ENCODE measurements at regions of chr3 and their contacts with region 1.

Region 1: GRCh38 chr3:187745201-187746058 is at the start of gene BCL6:
- DNase-seq: peak; percentile 97
- ATAC-seq: peak; percentile 28
- H3K4me3 ChIP-seq: peak within 1 kb of the TSS; percentile 98 to 100 (median 99)
- H3K27ac ChIP-seq: peak within 1 kb of the TSS; percentile 100
- H3K4me1 ChIP-seq: peaks cover 40% of the 10 kb centered on the region
- H3K27me3 ChIP-seq: peaks cover 0 to 5% of the 10 kb centered on the region in 2 experiments; a peak in 1 of 5 replicates
- CTCF ChIP-seq: no peak
- EP300 ChIP-seq: peak; percentile 64 to 69; a peak in 3 of 4 replicates
- POLR2A ChIP-seq: peak; percentile 69 to 82
- RAD21 ChIP-seq: 0 out of 2 replicates have a peak, but pooled peaks have one; percentile 13
- total RNA-seq, gene BCL6: 20.3 and 21.2 TPM in 2 replicates

Region 2: DNA sequence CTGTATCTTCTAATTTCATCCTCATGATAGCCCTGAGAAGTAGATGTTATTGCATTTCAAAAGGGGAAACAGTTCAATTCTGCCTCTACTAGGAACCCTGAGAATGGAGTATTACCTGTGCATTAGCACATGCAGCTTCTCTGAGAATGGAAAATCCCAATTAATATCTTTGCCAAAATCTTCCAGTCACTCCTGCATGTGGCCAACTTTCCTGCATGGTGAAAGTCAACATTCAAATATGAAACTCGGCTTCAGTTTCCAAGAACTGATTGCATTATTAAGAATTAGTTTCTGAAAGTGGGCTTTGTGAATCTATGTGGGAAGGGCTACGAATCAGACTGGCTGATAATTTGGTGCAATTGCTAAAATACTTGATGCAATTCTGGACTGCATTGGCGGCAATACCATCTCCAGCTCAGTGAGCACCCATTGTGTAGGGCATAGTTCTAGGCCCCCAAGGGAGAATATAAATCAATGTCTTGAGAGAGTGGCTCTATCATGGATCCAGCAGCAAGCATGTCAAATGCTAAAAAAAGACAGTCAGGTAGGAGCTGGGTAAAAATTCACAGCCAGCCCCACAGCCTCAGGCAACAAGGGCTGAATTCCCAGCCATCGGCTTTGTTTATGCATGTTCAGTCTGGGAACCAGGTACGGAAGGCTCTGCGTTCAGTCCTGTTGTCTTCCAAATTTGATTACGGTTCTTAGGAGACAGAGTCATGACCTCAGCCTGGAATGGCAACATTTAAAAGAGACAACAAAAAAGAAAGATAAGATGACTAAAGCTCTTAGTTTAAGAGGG is 18.6 kb after region 1 on chr3:
- CTCF ChIA-PET with region 1: no interaction called
- POLR2A ChIA-PET with region 1: interaction called, 17 read pairs
- in situ Hi-C with region 1: no loop called
- intact Hi-C with region 1: no loop called
- DNase-seq: no peak
- ATAC-seq: no peak
- H3K4me3 ChIP-seq: no peak overlapping the region
- H3K27ac ChIP-seq: no peak overlapping the region
- H3K4me1 ChIP-seq: peaks cover 34% of the 10 kb centered on the region
- H3K27me3 ChIP-seq: no peaks in the 10 kb centered on the region
- CTCF ChIP-seq: no peak
- EP300 ChIP-seq: no peak
- POLR2A ChIP-seq: no peak
- RAD21 ChIP-seq: no peak

Region 3: DNA sequence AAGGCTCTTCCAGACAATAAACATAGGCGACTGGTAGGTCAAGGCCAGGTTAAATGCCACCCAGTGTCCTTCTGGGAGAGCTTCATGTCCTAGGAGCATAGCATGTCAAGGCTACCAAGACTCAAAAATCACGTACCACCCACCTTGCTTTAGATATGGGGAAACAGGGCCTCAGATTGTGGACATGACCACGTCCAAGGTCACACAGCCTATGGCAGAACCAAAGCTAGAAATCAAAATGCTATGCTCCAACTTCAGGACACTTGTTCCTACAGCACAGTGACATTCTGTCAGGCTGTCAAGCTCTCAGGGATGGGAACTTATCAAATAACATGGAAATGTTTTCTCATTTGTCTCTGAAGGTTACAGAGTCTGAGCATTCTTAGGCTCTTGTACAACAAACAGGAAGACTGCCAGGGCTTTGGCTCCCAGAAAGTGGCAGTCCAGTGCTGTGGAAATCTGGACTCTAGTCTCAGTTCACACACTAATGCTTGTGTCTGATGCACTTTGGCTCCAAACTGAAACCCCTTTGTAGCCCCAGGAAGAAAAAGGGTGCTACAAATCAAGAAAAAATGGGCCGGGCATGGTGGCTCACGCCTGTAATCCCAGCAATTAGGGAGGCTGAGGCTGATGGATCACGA is 238.2 kb after region 1 on chr3:
- CTCF ChIA-PET with region 1: no interaction called
- POLR2A ChIA-PET with region 1: interaction called, 9 read pairs
- in situ Hi-C with region 1: no loop called
- intact Hi-C with region 1: loop called (anchors 5 kb)
- DNase-seq: peak; percentile 93
- ATAC-seq: peak; percentile 92
- H3K4me3 ChIP-seq: peak overlapping the region in 2 of 3 experiments; percentile 15 to 29; a peak in 2 of 6 replicates
- H3K27ac ChIP-seq: peak overlapping the region; percentile 70
- H3K4me1 ChIP-seq: peaks cover 62% of the 10 kb centered on the region
- H3K27me3 ChIP-seq: no peaks in the 10 kb centered on the region
- CTCF ChIP-seq: peak; percentile 56
- EP300 ChIP-seq: peak; percentile 38 to 60; a peak in 3 of 4 replicates
- POLR2A ChIP-seq: no peak
- RAD21 ChIP-seq: peak; percentile 32; the same call in 1 of the 2 replicates

Region 4: GRCh38 chr3:188037216-188037718 is 291.8 kb after region 1 on chr3:
- CTCF ChIA-PET with region 1: interaction called, 4 read pairs
- POLR2A ChIA-PET with region 1: interaction called, 11 read pairs
- in situ Hi-C with region 1: loop called (anchors 5 kb)
- intact Hi-C with region 1: loop called (anchors 1 kb)
- DNase-seq: peak; percentile 83
- ATAC-seq: peak; percentile 83
- H3K4me3 ChIP-seq: peak overlapping the region in 2 of 3 experiments; percentile 14 to 56; a peak in 1 of 6 replicates
- H3K27ac ChIP-seq: peak overlapping the region; percentile 82
- H3K4me1 ChIP-seq: peaks cover 62% of the 10 kb centered on the region
- H3K27me3 ChIP-seq: no peaks in the 10 kb centered on the region
- CTCF ChIP-seq: peak; percentile 79
- EP300 ChIP-seq: peak in 1 of 2 experiments; percentile 42; a peak in 1 of 4 replicates
- POLR2A ChIP-seq: no peak
- RAD21 ChIP-seq: peak; percentile 80

Region 5: GRCh38 chr3:188294823-188295487 is 549.5 kb after region 1 on chr3:
- CTCF ChIA-PET with region 1: no interaction called
- POLR2A ChIA-PET with region 1: interaction called, 31 read pairs
- in situ Hi-C with region 1: loop called (anchors 10 kb)
- intact Hi-C with region 1: loop called (anchors 2 kb)
- DNase-seq: peak; percentile 99
- ATAC-seq: peak; percentile 90
- H3K4me3 ChIP-seq: peak overlapping the region in 1 of 3 experiments; percentile 45; a peak in 2 of 6 replicates
- H3K27ac ChIP-seq: peak overlapping the region; percentile 94
- H3K4me1 ChIP-seq: peaks cover 99% of the 10 kb centered on the region
- H3K27me3 ChIP-seq: no peaks in the 10 kb centered on the region
- CTCF ChIP-seq: no peak
- EP300 ChIP-seq: peak; percentile 90 to 96; a peak in 3 of 4 replicates
- POLR2A ChIP-seq: peak; percentile 48 to 74; a peak in 3 of 4 replicates
- RAD21 ChIP-seq: peak; percentile 37; the same call in 1 of the 2 replicates

Region 6: GRCh38 chr3:189041482-189042090 is 1296.2 kb after region 1 on chr3:
- CTCF ChIA-PET with region 1: no interaction called
- POLR2A ChIA-PET with region 1: interaction called, 3 read pairs
- in situ Hi-C with region 1: no loop called
- intact Hi-C with region 1: loop called (anchors 10 kb)
- DNase-seq: peak; percentile 58
- ATAC-seq: peak; percentile 85
- H3K4me3 ChIP-seq: no peak overlapping the region
- H3K27ac ChIP-seq: no peak overlapping the region
- H3K4me1 ChIP-seq: peaks cover 15% of the 10 kb centered on the region
- H3K27me3 ChIP-seq: no peaks in the 10 kb centered on the region; a peak in 1 of 5 replicates
- CTCF ChIP-seq: peak; percentile 62
- EP300 ChIP-seq: no peak
- POLR2A ChIP-seq: no peak
- RAD21 ChIP-seq: no peak

Measured in HepG2 (cell line).